GM12878 (cell line): ENCODE measurements at regions of chr9 and their contacts with region 1.

Region 1: DNA sequence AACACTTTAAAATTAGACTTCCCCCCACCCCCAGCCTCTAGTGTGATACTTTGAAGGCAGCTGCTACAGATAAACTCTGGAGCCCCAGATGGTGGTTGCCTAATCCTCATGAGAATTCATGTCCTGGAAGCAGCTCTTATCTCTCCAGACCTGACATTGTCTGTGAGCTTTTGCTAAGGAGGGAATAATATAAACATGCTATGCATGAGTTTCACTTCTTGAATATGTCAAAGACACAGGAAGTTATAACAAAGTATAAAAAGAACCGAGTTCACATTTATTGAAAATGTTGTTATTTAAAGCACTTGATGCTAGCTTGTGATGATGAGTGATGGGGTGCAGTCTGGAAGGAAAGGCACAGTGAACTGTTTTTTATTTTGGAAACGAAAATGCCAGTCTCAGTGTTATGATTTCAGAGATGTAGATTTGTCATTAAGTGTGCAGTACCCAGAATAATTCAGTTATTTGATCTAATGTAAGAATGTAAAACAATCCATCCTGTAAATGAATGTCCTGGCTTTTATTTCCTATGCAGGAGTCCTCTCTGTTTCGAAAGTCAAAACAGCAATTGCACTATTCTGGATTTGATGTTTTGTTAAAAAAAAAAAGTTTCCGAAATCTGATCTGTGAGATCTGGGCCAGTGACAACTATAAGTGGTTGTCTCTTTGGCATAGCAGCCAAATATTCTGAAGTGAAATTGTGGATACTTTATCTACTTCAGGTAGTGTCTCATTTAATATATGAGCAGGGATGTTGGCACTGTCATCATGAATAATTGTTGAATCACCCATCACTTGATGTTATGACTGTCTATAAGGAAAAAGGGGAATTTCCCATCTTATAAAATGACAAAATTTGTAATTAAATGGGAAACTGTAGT is 77.0 kb downstream of the ZCCHC7 start:
- DNase-seq: peak; percentile 79
- ATAC-seq: peak; percentile 70
- H3K4me3 ChIP-seq: no peak overlapping the region; the same call in 1 of the 2 replicates
- H3K27ac ChIP-seq: peak overlapping the region; percentile 61
- H3K4me1 ChIP-seq: peaks cover 47% of the 10 kb centered on the region
- H3K27me3 ChIP-seq: no peaks in the 10 kb centered on the region
- CTCF ChIP-seq: no peak
- EP300 ChIP-seq: peak; percentile 34 to 55; a peak in 1 of 4 replicates
- POLR2A ChIP-seq: no peak
- RAD21 ChIP-seq: 0 out of 2 replicates have a peak, but pooled peaks have one; percentile 14

Region 2: DNA sequence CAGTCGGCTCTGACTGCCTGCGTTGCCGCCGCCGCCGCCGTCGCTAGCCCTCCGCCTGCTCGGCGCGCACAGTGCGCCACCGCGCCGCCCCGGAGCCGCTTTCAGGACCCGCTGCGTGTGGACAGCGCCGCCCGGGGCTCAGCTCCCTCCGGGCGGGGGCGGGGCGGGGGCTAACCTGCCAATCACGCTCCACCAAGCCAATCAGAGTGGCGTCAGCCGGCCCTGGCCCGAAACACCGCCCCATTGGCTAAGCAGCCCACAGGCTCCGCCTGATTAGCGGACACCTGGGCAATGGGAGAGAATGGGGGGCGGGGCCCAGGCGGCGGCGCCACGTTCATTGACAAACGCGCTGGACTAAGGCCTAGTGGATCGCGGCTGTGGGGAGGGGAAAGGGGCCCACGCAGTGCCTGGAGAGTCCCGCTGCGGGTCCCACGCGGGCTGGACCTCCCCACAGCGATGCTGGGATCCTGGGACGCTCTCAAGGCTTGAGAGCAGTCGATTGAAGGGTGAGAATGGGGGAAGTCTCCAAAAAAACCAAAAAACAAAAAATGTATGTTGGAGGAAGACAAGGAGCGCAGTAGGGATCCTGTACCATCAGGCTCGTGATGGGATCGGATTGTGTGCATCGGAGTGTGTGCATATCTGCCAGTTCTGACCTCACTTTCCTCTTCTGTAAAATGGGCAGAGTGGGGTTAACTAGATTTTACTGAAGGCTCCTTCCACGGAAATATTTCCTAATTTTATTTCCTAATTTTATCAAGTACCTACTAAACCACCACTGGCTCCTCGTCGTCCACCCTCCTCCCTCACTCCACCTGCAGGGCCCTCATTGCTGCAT is 169.6 kb before region 1 on chr9:
- CTCF ChIA-PET with region 1: interaction called, 13 read pairs
- POLR2A ChIA-PET with region 1: interaction called, 4 read pairs
- RAD21 ChIA-PET with region 1: interaction called, 5 read pairs
- SMC1A ChIA-PET with region 1: interaction called, 5 read pairs
- in situ Hi-C with region 1: loop called (anchors 5 kb)
- intact Hi-C with region 1: no loop called
- DNase-seq: peak; percentile 85
- ATAC-seq: peak; percentile 78
- H3K4me3 ChIP-seq: peak overlapping the region; percentile 96
- H3K27ac ChIP-seq: peak overlapping the region; percentile 88
- H3K4me1 ChIP-seq: peaks cover 20% of the 10 kb centered on the region
- H3K27me3 ChIP-seq: no peaks in the 10 kb centered on the region
- CTCF ChIP-seq: no peak
- EP300 ChIP-seq: no peak
- POLR2A ChIP-seq: no peak
- RAD21 ChIP-seq: no peak

Region 3: DNA sequence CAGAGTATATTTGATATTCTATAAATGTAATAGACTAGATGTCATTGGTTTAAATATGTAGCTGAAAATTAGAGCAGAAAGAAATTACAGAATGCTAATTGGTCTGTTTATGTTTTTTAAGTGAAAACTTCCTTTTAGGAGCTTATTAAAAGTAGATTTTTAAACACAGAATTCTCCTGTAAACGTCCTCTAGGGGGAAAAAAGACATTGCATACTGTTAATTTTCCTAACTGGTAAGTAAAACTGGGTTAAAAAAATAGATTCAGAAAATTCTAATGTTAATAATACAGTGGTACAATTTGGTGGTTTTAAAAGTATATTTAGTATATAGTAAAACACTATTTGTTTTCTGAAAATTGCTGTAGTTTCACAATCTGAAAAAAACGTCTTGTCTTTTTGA is 17.3 kb before region 1 on chr9:
- CTCF ChIA-PET with region 1: interaction called, 6 read pairs
- POLR2A ChIA-PET with region 1: interaction called, 4 read pairs
- RAD21 ChIA-PET with region 1: interaction called, 3 read pairs
- SMC1A ChIA-PET with region 1: interaction called, 12 read pairs
- in situ Hi-C with region 1: no loop called
- intact Hi-C with region 1: no loop called
- DNase-seq: no peak
- ATAC-seq: no peak
- H3K4me3 ChIP-seq: no peak overlapping the region
- H3K27ac ChIP-seq: no peak overlapping the region
- H3K4me1 ChIP-seq: no peaks in the 10 kb centered on the region; the same call in 1 of the 2 replicates
- H3K27me3 ChIP-seq: no peaks in the 10 kb centered on the region
- CTCF ChIP-seq: no peak
- EP300 ChIP-seq: no peak
- POLR2A ChIP-seq: no peak
- RAD21 ChIP-seq: no peak

Region 4: DNA sequence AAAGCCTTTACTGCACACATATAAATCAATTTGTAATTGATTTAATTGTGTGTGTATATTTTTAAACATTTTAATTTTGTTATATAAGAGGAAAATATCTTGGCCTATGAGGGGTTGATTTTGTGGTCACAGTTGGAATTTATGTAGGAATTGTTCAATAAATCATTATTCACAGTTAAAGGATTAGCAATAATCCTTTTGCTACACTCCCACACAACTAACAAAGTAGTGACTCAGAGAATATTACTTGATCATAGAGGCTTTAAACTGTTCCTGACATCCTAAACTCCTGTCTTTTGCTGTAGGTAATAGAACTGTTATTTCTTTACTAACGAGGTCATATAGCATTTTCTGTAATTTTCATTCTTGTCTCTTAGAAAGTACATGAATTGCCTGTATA is 18.4 kb after region 1 on chr9:
- CTCF ChIA-PET with region 1: interaction called, 10 read pairs
- POLR2A ChIA-PET with region 1: interaction called, 5 read pairs
- RAD21 ChIA-PET with region 1: interaction called, 14 read pairs
- SMC1A ChIA-PET with region 1: interaction called, 46 read pairs
- in situ Hi-C with region 1: no loop called
- intact Hi-C with region 1: no loop called
- DNase-seq: no peak
- ATAC-seq: no peak
- H3K4me3 ChIP-seq: no peak overlapping the region
- H3K27ac ChIP-seq: no peak overlapping the region
- H3K4me1 ChIP-seq: peaks cover 3% of the 10 kb centered on the region
- H3K27me3 ChIP-seq: no peaks in the 10 kb centered on the region
- CTCF ChIP-seq: no peak
- EP300 ChIP-seq: no peak
- POLR2A ChIP-seq: no peak
- RAD21 ChIP-seq: no peak

Region 5: GRCh38 chr9:37293664-37294524 is 96.5 kb after region 1 on chr9:
- CTCF ChIA-PET with region 1: interaction called, 5 read pairs
- POLR2A ChIA-PET with region 1: interaction called, 6 read pairs
- RAD21 ChIA-PET with region 1: interaction called, 12 read pairs
- SMC1A ChIA-PET with region 1: interaction called, 40 read pairs
- in situ Hi-C with region 1: no loop called
- intact Hi-C with region 1: loop called (anchors 5 kb)
- DNase-seq: peak; percentile 91
- ATAC-seq: peak; percentile 73
- H3K4me3 ChIP-seq: no peak overlapping the region
- H3K27ac ChIP-seq: peak overlapping the region; percentile 90
- H3K4me1 ChIP-seq: peaks cover 60% of the 10 kb centered on the region
- H3K27me3 ChIP-seq: no peaks in the 10 kb centered on the region
- CTCF ChIP-seq: no peak
- EP300 ChIP-seq: peak; percentile 95 to 96
- POLR2A ChIP-seq: no peak
- RAD21 ChIP-seq: no peak

Region 6: GRCh38 chr9:37324261-37324683 is 126.9 kb after region 1 on chr9:
- CTCF ChIA-PET with region 1: interaction called, 11 read pairs
- POLR2A ChIA-PET with region 1: interaction called, 4 read pairs
- RAD21 ChIA-PET with region 1: interaction called, 31 read pairs
- SMC1A ChIA-PET with region 1: interaction called, 15 read pairs
- in situ Hi-C with region 1: no loop called
- intact Hi-C with region 1: no loop called
- DNase-seq: peak; percentile 43
- ATAC-seq: peak; percentile 76
- H3K4me3 ChIP-seq: peak overlapping the region; percentile 18
- H3K27ac ChIP-seq: peak overlapping the region; percentile 93
- H3K4me1 ChIP-seq: peaks cover 30% of the 10 kb centered on the region
- H3K27me3 ChIP-seq: no peaks in the 10 kb centered on the region
- CTCF ChIP-seq: no peak
- EP300 ChIP-seq: no peak
- POLR2A ChIP-seq: 0 out of 2 replicates have a peak, but pooled peaks have one; percentile 48
- RAD21 ChIP-seq: no peak

Region 7: DNA sequence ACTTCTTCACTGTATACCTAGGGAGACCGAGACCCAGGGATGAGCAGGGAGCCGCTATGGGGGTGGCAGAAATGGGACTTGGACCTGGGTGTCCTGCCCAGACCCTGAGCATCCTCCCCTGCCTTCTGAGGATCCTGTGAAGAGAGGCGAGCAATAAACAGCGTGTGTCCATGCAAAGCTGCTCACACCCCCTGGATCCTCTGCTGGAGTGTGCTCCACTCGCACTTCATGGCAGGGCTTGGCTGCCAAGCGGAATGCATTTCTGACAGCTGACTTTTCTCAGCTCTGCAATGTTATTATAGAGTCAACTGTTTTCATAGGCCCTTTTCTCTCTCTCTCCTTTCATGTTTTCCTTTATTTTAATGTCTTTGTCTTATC is 1164.1 kb after region 1 on chr9:
- CTCF ChIA-PET with region 1: no interaction called
- POLR2A ChIA-PET with region 1: no interaction called
- RAD21 ChIA-PET with region 1: no interaction called
- SMC1A ChIA-PET with region 1: no interaction called
- in situ Hi-C with region 1: no loop called
- intact Hi-C with region 1: no loop called
- DNase-seq: no peak
- ATAC-seq: no peak
- H3K4me3 ChIP-seq: no peak overlapping the region
- H3K27ac ChIP-seq: no peak overlapping the region
- H3K4me1 ChIP-seq: no peaks in the 10 kb centered on the region
- H3K27me3 ChIP-seq: no peaks in the 10 kb centered on the region
- CTCF ChIP-seq: no peak
- EP300 ChIP-seq: no peak
- POLR2A ChIP-seq: no peak
- RAD21 ChIP-seq: no peak